Dendritic cell treated with granulocyte-macrophage colony-stimulating factor and Interleukin-4, amounts not matched to agents 40 ng/mL and 50 ng/mL, for 4 days (primary cell): ENCODE measurements at regions of chr10 and their contacts with region 1.

Region 1: DNA sequence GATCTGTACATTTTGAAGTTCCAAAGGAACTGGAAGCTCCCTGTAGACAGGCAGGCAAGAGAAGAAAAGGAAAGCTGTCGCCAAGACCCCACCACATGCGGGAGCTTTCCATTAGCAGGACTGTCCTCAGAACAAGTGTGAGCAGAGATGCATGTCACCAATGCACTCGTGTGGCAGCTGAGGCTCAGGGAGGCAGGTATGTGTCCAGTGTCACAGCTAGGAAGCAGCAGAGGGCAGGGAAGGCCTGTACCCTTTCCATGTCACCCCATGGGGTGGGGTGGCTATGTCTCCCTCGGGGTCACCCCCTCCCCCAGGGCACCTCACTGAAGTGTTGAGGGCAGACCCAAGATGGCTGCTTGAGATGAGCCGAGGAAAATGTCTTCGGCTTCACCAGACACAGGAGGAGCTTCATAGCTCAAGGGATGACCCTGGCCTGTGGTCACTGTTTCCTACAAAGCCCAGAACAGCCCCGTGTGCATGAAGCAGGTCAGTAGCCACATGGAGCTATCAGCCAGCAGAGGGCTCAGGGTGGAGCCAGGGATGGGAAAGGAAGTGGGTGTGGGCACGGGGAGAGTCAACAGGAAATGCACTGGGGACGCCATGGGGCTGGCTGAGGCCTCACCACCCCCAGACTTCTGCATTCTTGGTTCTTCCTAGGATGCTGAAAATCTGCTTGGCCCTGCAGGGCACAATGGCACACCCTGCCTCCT is 96.6 kb downstream of the FAM53B start:
- H3K4me3 Mint-ChIP-seq: peak overlapping the region; percentile 51
- H3K27ac Mint-ChIP-seq: peak overlapping the region; percentile 83
- H3K4me1 Mint-ChIP-seq: peaks cover 96% of the 10 kb centered on the region
- H3K27me3 Mint-ChIP-seq: no peaks in the 10 kb centered on the region

Region 2: DNA sequence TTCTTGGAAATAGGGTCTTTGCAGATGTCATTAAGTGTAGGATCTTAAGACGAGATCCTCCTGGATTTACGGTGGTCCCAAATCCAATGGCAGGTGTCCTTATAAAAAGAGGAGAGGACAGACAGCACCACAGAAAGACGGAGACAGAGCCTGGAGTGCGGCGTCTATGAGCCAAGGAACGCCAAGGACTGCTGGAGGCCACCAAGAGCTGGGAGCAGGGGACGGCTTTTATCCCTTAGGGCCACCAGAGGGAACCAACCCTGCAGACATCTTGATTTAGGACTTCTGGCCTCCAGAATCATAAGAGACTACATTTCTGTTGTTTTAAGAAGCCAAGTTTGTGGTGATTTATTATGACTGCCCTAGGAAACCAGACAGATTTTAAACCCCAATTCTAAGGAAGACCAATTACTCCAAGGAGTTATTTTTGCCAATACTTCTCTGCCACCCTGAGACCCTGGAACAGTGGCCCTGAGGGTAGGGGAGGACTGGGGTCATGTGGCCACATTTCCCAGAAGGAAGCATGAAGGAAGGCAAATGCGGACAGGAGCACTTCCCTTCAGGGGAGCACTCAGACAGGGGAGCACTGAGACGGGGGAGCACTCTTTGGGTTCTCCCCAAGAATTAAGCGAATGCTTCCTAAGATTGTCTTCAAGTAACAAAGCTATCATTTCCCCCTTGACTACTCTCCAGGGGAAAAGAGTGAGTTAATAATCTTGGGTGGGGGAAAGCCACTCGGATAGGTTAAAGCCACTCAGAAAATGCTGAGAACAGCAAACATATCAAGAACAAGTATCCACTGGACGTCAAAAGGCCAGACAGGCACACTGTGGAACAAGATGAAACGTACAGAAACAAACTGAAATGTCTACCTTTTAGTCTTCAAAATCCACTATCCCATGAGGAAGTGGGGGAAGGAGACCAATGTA is 621.7 kb before region 1 on chr10:
- intact Hi-C with region 1: no loop called
- H3K4me3 Mint-ChIP-seq: no peak overlapping the region
- H3K27ac Mint-ChIP-seq: peak overlapping the region; percentile 33
- H3K4me1 Mint-ChIP-seq: peaks cover 24% of the 10 kb centered on the region
- H3K27me3 Mint-ChIP-seq: peaks cover 33% of the 10 kb centered on the region

Region 3: DNA sequence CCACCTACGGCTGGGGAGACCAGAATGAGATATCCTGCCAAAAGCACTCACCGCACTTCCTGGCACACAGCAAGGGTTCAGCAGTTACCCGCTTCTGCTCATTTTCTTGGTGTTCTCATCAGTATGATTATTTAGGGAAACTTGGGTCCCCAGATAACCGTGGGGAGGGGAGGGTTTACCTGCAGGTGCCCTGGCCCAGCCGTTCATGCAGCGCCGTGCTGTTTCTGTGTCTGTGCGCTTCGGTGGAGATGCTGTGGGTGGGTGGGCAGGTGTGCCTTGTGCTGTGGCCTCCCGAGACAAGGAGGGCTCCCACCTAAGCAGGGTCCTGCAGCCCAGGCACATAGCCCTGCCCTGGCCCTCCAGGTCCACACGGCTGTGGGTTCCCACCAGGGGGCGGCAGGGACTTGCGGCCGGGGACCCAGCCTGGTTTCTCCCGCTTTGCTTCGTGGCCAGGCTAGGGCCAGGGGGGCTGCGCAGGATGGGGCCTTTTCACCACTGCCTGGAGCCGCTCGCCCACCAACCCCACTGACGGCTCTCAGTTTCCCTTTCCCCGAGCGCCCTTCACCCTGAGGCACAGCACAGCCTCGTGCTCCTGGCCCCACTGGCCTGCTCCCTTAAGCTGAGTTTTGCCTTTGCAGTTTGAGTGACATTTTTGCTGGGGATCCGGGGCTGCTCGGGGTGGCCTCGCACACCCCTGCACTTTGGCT is 107.5 kb before region 1 on chr10:
- intact Hi-C with region 1: no loop called
- H3K4me3 Mint-ChIP-seq: no peak overlapping the region
- H3K27ac Mint-ChIP-seq: no peak overlapping the region
- H3K4me1 Mint-ChIP-seq: peaks cover 36% of the 10 kb centered on the region
- H3K27me3 Mint-ChIP-seq: peaks cover 3% of the 10 kb centered on the region

Region 4: GRCh38 chr10:124579011-124579399 is 68.6 kb before region 1 on chr10:
- intact Hi-C with region 1: no loop called
- H3K4me3 Mint-ChIP-seq: no peak overlapping the region
- H3K27ac Mint-ChIP-seq: no peak overlapping the region
- H3K4me1 Mint-ChIP-seq: peaks cover 7% of the 10 kb centered on the region
- H3K27me3 Mint-ChIP-seq: peaks cover 2% of the 10 kb centered on the region

Region 5: GRCh38 chr10:124680675-124681074 is 33.1 kb after region 1 on chr10:
- intact Hi-C with region 1: loop called (anchors 5 kb)
- H3K4me3 Mint-ChIP-seq: no peak overlapping the region
- H3K27ac Mint-ChIP-seq: peak overlapping the region; percentile 76
- H3K4me1 Mint-ChIP-seq: peaks cover 85% of the 10 kb centered on the region
- H3K27me3 Mint-ChIP-seq: no peaks in the 10 kb centered on the region